ENCODE measurements at regions of chr2 and their contacts with region 1.

Region 1: GRCh38 chr2:29115797-29116781 is 874 bp downstream of the CLIP4 start:
- DNase-seq: no peak
- ATAC-seq: no peak
- H3K4me3 ChIP-seq: no peak overlapping the region
- H3K27ac ChIP-seq: no peak overlapping the region
- H3K4me1 ChIP-seq: peaks cover 5 to 6% of the 10 kb centered on the region in 2 experiments; a peak in 3 of 5 replicates
- H3K27me3 ChIP-seq: peaks cover 19 to 29% of the 10 kb centered on the region in 2 experiments
- CTCF ChIP-seq: no peak
- EP300 ChIP-seq: no peak
- POLR2A ChIP-seq: no peak
- RAD21 ChIP-seq: no peak

Region 2: GRCh38 chr2:29130295-29130694 is 14.2 kb after region 1 on chr2:
- CTCF ChIA-PET with region 1: no interaction called
- POLR2A ChIA-PET with region 1: interaction called, 10 read pairs
- in situ Hi-C with region 1: no loop called
- intact Hi-C with region 1: no loop called
- DNase-seq: peak in 2 of 4 experiments; percentile 32 to 65
- ATAC-seq: peak; percentile 83
- H3K4me3 ChIP-seq: no peak overlapping the region
- H3K27ac ChIP-seq: no peak overlapping the region; the same call in 2 of the 3 replicates
- H3K4me1 ChIP-seq: peaks cover 0 to 6% of the 10 kb centered on the region in 2 experiments; a peak in 1 of 5 replicates
- H3K27me3 ChIP-seq: 0 out of 5 replicates have a peak, but pooled peaks cover 0 to 3% of the 10 kb centered on the region in 2 experiments
- CTCF ChIP-seq: no peak
- EP300 ChIP-seq: peak; percentile 12; the same call in 1 of the 2 replicates
- POLR2A ChIP-seq: no peak
- RAD21 ChIP-seq: no peak

Region 3: DNA sequence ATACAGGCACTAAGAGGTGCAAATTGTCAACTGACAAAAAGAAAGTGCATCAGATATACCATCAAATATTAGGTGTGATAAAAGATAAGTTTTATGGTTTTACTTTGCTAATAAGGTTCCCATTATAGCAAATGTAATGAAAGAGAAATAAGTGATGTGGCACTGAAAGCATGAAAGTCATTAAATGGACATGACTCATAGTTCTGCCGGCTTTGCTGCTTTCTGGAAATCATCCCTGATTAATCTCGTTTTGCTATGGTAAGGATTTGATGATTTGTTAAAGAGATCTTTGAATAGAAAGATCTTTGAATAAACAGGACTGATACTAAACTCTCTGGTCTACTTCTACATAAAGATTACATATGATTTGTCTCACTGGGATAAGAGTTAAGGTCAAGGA is 71.8 kb after region 1 on chr2:
- CTCF ChIA-PET with region 1: no interaction called
- POLR2A ChIA-PET with region 1: no interaction called
- in situ Hi-C with region 1: no loop called
- intact Hi-C with region 1: no loop called
- DNase-seq: no peak
- ATAC-seq: no peak
- H3K4me3 ChIP-seq: no peak overlapping the region
- H3K27ac ChIP-seq: no peak overlapping the region
- H3K4me1 ChIP-seq: no peaks in the 10 kb centered on the region
- H3K27me3 ChIP-seq: peaks cover 0 to 3% of the 10 kb centered on the region in 2 experiments; a peak in 1 of 5 replicates
- CTCF ChIP-seq: no peak
- EP300 ChIP-seq: no peak
- POLR2A ChIP-seq: no peak
- RAD21 ChIP-seq: no peak

Region 4: GRCh38 chr2:29281086-29281915 is 165.2 kb after region 1 on chr2:
- CTCF ChIA-PET with region 1: no interaction called
- POLR2A ChIA-PET with region 1: no interaction called
- in situ Hi-C with region 1: no loop called
- intact Hi-C with region 1: no loop called
- DNase-seq: no peak
- ATAC-seq: 0 out of 3 replicates have a peak, but pooled peaks have one; percentile 37
- H3K4me3 ChIP-seq: no peak overlapping the region
- H3K27ac ChIP-seq: no peak overlapping the region
- H3K4me1 ChIP-seq: no peaks in the 10 kb centered on the region
- H3K27me3 ChIP-seq: no peaks in the 10 kb centered on the region; a peak in 1 of 5 replicates
- CTCF ChIP-seq: no peak
- EP300 ChIP-seq: no peak
- POLR2A ChIP-seq: no peak
- RAD21 ChIP-seq: no peak

Region 5: DNA sequence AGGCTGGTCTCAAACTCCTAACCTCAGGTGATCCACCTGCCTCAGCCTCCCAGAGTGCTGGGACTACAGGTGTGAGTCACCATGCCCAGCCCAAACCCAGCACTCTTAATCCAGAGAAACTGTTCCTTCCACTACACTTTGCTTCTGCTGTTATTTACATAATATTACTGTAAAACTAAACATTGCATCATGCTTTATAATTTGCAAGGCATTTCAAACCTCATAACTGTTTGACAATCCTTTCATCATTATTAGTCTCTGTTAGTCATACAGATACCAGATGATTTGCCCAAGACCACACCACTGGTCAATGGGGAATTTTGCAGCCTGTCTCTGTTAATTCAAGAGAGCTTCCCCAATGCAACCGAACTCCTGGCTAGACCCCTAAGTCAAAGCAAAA is 467.0 kb after region 1 on chr2:
- CTCF ChIA-PET with region 1: no interaction called
- POLR2A ChIA-PET with region 1: no interaction called
- in situ Hi-C with region 1: no loop called
- intact Hi-C with region 1: no loop called
- DNase-seq: no peak
- ATAC-seq: no peak
- H3K4me3 ChIP-seq: no peak overlapping the region
- H3K27ac ChIP-seq: no peak overlapping the region
- H3K4me1 ChIP-seq: no peaks in the 10 kb centered on the region
- H3K27me3 ChIP-seq: peaks cover 2 to 14% of the 10 kb centered on the region in 2 experiments; a peak in 3 of 5 replicates
- CTCF ChIP-seq: no peak
- EP300 ChIP-seq: no peak
- POLR2A ChIP-seq: no peak
- RAD21 ChIP-seq: no peak

Region 6: DNA sequence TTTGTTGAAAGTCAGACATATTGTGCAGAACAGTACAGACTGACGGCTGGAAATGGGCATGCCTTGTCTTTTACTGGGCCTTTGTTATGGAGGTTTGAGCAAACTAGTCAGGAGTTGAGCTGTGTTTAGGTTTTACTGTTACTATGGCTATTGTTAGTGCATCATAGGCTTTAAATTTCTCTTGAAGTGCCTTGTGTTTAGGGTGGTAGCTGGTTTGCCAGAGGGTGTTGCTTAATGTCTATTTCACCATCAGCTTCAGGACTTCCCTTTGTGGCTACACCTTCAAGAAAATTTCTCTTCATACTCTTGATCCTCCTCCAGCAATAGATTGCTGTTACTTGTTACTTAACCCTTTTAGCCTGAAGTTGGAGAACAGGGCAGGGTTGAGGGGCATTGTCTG is 1586.6 kb after region 1 on chr2:
- CTCF ChIA-PET with region 1: no interaction called
- POLR2A ChIA-PET with region 1: no interaction called
- in situ Hi-C with region 1: no loop called
- intact Hi-C with region 1: no loop called
- DNase-seq: no peak
- ATAC-seq: no peak
- H3K4me3 ChIP-seq: no peak overlapping the region
- H3K27ac ChIP-seq: no peak overlapping the region
- H3K4me1 ChIP-seq: peaks cover 0 to 3% of the 10 kb centered on the region in 2 experiments; a peak in 1 of 5 replicates
- H3K27me3 ChIP-seq: peaks cover 0 to 4% of the 10 kb centered on the region in 2 experiments; a peak in 1 of 5 replicates
- CTCF ChIP-seq: no peak
- EP300 ChIP-seq: no peak
- POLR2A ChIP-seq: no peak
- RAD21 ChIP-seq: no peak

Measured in K562 (cell line).